Activated CD4-positive, alpha-beta T cell treated with anti-CD3 and anti-CD28 coated beads, Interleukin-2, amount 10 ng/mL, durations not matched to agents 24 days and 14 days (primary cell): ENCODE measurements at regions of chr6 and their contacts with region 1.

Region 1: GRCh38 chr6:83884523-83884922 is 25.0 kb downstream of the CYB5R4 start:
- DNase-seq: peak; percentile 59
- H3K4me3 Mint-ChIP-seq: no peak overlapping the region
- H3K27ac Mint-ChIP-seq: no peak overlapping the region
- H3K4me1 Mint-ChIP-seq: peaks cover 2% of the 10 kb centered on the region
- H3K27me3 Mint-ChIP-seq: no peaks in the 10 kb centered on the region

Region 2: GRCh38 chr6:83592770-83593394 is 291.6 kb before region 1 on chr6:
- intact Hi-C with region 1: no loop called
- DNase-seq: peak; percentile 57
- H3K4me3 Mint-ChIP-seq: no peak overlapping the region
- H3K27ac Mint-ChIP-seq: no peak overlapping the region
- H3K4me1 Mint-ChIP-seq: peaks cover 2% of the 10 kb centered on the region
- H3K27me3 Mint-ChIP-seq: no peaks in the 10 kb centered on the region

Region 3: GRCh38 chr6:83859410-83860358 is 24.8 kb before region 1 on chr6 and contains the start of gene CYB5R4:
- intact Hi-C with region 1: no loop called
- DNase-seq: peak; percentile 99
- H3K4me3 Mint-ChIP-seq: peak within 1 kb of the TSS; percentile 98
- H3K27ac Mint-ChIP-seq: peak within 1 kb of the TSS; percentile 88
- H3K4me1 Mint-ChIP-seq: peaks cover 21% of the 10 kb centered on the region
- H3K27me3 Mint-ChIP-seq: peaks cover 13% of the 10 kb centered on the region
- total RNA-seq, gene CYB5R4: 24.7 and 27.0 TPM in 2 replicates

Region 4: DNA sequence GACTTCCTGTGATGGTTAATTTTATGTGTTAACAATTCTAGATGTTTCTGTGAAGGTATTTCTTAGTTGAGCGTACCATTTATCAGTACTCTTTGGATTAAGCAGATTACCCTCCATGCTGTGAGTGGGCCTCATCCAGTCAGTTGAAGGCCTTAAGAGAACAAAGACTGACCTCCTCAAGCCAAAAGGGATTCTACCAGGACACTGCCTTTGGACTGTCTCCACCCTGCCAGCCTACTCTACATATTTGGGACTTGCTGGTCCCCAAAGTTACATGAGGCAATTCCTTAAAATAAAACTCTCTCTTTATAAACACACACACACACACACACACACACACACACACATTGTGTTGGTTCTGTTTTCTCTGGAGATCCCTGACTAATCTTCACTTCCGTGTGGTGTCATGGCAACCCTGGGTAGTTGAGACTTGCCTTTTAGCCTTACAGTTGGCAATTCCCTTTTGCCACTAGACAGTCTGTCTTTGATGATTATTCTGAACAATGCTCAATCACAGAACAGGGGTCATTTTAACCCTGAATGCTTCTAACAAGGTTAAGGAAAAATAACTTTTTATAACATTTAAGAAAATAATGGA is 181.3 kb after region 1 on chr6:
- intact Hi-C with region 1: no loop called
- DNase-seq: no peak
- H3K4me3 Mint-ChIP-seq: no peak overlapping the region
- H3K27ac Mint-ChIP-seq: no peak overlapping the region
- H3K4me1 Mint-ChIP-seq: no peaks in the 10 kb centered on the region
- H3K27me3 Mint-ChIP-seq: no peaks in the 10 kb centered on the region

Region 5: DNA sequence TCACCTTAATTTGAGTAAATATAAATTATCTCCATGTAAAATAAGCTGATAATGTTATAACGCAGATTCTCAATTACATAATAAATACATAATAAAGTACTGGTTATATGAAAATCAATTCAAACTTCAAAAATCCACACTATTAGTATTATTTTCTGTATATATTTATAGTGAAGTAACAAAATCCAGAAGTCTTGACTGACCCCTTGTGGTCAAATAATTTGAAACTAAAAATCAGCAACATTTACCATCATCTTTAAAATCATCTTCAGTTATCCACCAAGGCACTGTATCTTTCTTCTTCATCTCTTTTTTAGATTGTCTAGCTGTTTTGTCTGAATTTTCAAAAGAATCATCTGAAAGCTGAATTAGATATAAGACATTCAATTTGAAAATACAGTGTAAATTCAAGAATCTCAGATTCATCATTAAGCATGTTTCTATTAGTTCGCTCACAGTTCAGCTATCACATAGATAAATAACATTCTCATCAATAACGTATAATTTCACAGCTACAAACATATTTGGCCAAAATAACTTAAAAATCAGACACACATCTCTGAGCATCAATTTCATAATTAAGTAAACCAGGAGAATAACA is 336.4 kb after region 1 on chr6:
- intact Hi-C with region 1: loop called (anchors 1 kb)
- DNase-seq: no peak
- H3K4me3 Mint-ChIP-seq: no peak overlapping the region
- H3K27ac Mint-ChIP-seq: no peak overlapping the region
- H3K4me1 Mint-ChIP-seq: peaks cover 5% of the 10 kb centered on the region
- H3K27me3 Mint-ChIP-seq: no peaks in the 10 kb centered on the region

Region 6: DNA sequence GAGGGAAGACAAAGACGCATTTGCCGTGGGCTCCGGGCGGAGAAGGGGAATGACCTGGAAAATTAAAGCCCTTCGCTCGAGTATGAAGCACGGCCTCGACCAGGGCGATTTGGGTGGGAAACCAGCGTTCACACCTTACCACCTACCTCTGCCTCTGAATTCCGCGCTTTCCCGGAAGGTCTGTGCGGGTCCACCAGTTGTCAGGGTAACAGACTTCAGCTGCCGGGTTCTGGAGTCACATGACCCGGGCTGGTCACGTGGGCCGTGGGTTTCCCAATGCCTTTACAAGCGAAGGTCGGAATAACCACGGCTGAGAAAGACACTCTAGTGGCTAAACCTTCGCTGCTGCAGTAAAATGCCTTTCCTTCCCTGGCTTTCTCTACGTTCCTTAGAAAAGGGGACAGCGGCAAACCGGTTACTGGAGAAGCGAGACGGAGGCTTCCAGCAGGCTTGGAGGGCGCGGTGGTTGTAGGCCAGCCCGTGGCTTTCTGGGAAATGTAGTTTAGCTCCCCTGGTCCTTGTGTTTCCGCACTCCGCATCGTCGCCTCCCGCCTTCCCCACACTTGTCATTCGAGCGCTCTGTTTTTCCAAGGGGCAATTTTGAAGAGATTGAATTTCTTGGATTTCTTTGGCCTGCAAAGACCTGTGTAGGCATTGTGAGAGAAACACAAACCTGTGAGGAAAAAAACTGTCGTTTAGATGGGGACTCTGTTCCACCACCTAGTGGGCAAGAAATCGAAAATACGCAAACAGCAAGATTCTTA is 343.1 kb after region 1 on chr6 and contains the start of gene CEP162:
- intact Hi-C with region 1: loop called (anchors 1 kb)
- DNase-seq: peak; percentile 97
- H3K4me3 Mint-ChIP-seq: peak within 1 kb of the TSS; percentile 98
- H3K27ac Mint-ChIP-seq: peak within 1 kb of the TSS; percentile 89
- H3K4me1 Mint-ChIP-seq: peaks cover 17% of the 10 kb centered on the region
- H3K27me3 Mint-ChIP-seq: peaks cover 13% of the 10 kb centered on the region
- total RNA-seq, gene CEP162: 3.5 and 4.0 TPM in 2 replicates